ENCODE measurements at regions of chr18 and their contacts with region 1.

Region 1: DNA sequence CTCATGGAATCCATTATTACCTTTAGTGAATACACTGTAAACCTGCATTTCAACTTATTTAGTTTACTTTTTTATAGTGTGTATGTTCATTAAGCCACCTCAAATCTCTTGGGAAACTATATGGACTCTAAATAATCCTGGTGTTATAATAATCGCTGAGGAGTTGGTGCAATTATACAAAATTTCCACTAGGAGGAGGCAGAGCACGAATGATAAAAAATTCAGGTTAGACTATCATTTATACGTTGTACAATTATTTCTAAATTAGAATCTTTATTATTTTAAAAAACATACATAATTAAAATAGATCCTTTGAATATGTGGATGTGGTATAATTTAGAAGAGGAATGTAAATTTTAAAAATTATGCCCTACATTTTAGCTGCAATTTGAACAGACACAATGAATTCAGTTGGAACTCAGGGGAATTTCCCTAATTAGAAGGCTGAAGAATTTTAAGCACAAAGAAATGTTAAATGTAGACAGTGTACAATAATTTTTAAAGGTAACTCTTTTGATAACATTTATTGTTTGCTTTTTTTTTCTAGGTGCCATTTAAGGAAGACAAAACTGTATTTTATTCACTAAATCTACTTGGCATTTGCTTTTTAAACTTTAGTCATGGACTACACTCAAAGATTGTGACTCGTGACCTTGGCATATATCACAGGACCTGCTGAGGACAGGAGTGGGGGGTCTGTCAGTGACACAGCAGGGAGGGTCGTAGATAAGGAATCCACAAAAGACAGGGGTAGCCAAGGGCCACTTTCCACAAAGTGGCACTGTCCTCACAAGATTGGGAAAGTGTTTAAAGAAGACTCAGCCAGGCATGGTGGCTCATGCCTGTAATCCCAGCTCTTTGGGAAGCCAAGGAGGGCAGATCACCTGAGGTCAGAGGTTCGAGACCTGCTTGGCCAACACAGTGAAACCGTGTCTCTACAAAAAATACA is 45.5 kb downstream of the RAB12 start:
- DNase-seq: no peak
- ATAC-seq: no peak
- H3K4me3 Mint-ChIP-seq: no peak overlapping the region
- H3K27ac Mint-ChIP-seq: no peak overlapping the region
- H3K4me1 Mint-ChIP-seq: no peaks in the 10 kb centered on the region
- H3K27me3 Mint-ChIP-seq: peaks cover 16% of the 10 kb centered on the region
- CTCF ChIP-seq: peak; percentile 88

Region 2: DNA sequence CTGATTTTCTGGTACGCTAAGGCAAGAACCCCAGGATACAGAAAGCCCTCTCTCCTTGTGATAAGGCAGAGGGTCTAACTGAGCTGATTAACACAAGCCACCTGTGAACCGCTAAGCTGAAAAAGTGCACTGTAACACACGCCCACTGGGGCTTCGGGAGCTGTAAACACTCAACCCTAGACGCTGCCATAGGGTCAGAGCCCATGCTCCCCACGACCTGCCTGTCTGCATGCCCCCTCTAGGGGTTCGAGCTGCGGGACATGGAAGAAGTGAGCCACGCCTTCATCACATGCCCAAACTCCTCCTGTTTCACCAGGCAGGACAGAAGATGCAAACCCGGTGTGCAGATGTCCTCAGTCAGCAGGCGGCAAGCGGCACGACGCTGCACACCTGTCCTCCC is 219.4 kb before region 1 on chr18:
- CTCF ChIA-PET with region 1: no interaction called
- POLR2A ChIA-PET with region 1: no interaction called
- intact Hi-C with region 1: no loop called
- DNase-seq: no peak
- ATAC-seq: no peak
- H3K4me3 Mint-ChIP-seq: no peak overlapping the region
- H3K27ac Mint-ChIP-seq: no peak overlapping the region
- H3K4me1 Mint-ChIP-seq: no peaks in the 10 kb centered on the region
- H3K27me3 Mint-ChIP-seq: no peaks in the 10 kb centered on the region
- CTCF ChIP-seq: no peak

Region 3: DNA sequence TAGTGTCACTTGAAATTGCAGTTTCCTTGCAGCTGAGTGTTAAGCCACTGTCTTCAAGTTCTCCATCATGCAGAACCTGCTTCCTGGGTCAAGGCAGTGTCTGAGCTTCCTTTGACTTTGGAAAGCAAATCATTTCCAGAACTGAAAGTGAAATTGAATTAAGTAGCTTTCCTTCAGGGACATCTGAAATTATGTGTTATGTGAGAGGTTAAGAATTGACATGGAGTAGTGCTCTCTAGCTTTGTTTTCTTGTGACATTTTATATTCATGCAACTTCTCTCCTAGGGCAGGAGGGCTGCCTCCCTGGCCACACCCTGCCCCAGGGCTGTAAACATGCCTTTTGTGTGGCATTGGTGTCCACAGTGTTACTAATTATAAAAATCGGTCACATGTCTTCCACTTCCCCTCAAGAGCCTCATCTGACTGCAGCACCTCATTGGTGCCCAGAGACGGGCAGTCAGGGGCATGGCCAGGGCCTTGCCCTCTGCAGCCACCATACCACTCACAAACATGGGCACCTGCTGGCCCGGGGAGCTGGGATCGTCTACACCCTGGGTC is 31.1 kb before region 1 on chr18:
- CTCF ChIA-PET with region 1: interaction called, 11 read pairs
- POLR2A ChIA-PET with region 1: no interaction called
- intact Hi-C with region 1: no loop called
- DNase-seq: no peak
- ATAC-seq: peak; percentile 47
- H3K4me3 Mint-ChIP-seq: no peak overlapping the region
- H3K27ac Mint-ChIP-seq: peak overlapping the region; percentile 43
- H3K4me1 Mint-ChIP-seq: peaks cover 46% of the 10 kb centered on the region
- H3K27me3 Mint-ChIP-seq: no peaks in the 10 kb centered on the region
- CTCF ChIP-seq: no peak

Region 4: GRCh38 chr18:8643326-8643878 is 11.4 kb before region 1 on chr18:
- CTCF ChIA-PET with region 1: interaction called, 24 read pairs
- POLR2A ChIA-PET with region 1: interaction called, 3 read pairs
- intact Hi-C with region 1: no loop called
- DNase-seq: no peak
- ATAC-seq: no peak
- H3K4me3 Mint-ChIP-seq: no peak overlapping the region
- H3K27ac Mint-ChIP-seq: no peak overlapping the region
- H3K4me1 Mint-ChIP-seq: no peaks in the 10 kb centered on the region
- H3K27me3 Mint-ChIP-seq: peaks cover 8% of the 10 kb centered on the region
- CTCF ChIP-seq: no peak

Region 5: GRCh38 chr18:8673256-8674209 is 18.8 kb after region 1 on chr18:
- CTCF ChIA-PET with region 1: interaction called, 14 read pairs
- POLR2A ChIA-PET with region 1: no interaction called
- intact Hi-C with region 1: no loop called
- DNase-seq: no peak
- ATAC-seq: no peak
- H3K4me3 Mint-ChIP-seq: no peak overlapping the region
- H3K27ac Mint-ChIP-seq: no peak overlapping the region
- H3K4me1 Mint-ChIP-seq: no peaks in the 10 kb centered on the region
- H3K27me3 Mint-ChIP-seq: no peaks in the 10 kb centered on the region
- CTCF ChIP-seq: no peak

Region 6: DNA sequence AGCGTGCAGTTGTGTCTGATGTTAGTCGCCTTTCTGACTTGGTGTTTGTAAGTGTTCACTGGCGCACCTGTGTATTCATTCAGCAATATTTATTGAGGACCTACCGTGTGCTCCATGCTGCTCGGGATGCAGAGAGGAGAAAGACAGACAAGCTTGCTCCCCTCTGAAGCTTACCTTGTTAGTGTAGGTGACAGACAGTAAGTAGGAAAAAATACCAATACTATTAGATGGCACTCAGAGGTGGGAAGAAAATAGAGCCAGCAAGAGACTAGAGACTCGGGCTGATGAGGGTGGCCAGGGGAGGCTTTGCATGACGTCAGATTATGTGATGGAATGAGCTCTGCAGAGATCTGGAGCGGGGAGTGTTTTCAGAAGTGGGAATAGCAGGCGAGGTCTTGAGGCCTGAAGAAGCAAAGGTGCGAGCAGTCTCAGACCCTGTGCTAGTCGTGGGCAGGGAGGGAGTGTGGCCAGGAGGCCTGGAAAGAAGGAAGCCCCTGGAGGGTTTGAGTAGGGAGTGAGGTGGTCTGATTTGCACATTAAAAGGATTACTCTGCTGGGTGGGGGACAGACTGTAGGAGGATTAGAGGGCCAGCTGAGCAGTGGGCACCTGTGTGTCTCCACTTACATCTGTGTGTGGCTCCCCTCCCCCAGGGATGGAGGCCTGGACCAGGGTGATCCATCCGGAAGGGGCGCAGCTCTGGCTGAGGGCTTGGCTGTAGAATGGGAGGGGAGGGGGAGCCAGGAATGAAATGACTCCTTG is 62.4 kb after region 1 on chr18:
- CTCF ChIA-PET with region 1: no interaction called
- POLR2A ChIA-PET with region 1: no interaction called
- intact Hi-C with region 1: no loop called
- DNase-seq: no peak
- ATAC-seq: no peak
- H3K4me3 Mint-ChIP-seq: no peak overlapping the region
- H3K27ac Mint-ChIP-seq: no peak overlapping the region
- H3K4me1 Mint-ChIP-seq: no peaks in the 10 kb centered on the region
- H3K27me3 Mint-ChIP-seq: peaks cover 6% of the 10 kb centered on the region
- CTCF ChIP-seq: no peak

Region 7: DNA sequence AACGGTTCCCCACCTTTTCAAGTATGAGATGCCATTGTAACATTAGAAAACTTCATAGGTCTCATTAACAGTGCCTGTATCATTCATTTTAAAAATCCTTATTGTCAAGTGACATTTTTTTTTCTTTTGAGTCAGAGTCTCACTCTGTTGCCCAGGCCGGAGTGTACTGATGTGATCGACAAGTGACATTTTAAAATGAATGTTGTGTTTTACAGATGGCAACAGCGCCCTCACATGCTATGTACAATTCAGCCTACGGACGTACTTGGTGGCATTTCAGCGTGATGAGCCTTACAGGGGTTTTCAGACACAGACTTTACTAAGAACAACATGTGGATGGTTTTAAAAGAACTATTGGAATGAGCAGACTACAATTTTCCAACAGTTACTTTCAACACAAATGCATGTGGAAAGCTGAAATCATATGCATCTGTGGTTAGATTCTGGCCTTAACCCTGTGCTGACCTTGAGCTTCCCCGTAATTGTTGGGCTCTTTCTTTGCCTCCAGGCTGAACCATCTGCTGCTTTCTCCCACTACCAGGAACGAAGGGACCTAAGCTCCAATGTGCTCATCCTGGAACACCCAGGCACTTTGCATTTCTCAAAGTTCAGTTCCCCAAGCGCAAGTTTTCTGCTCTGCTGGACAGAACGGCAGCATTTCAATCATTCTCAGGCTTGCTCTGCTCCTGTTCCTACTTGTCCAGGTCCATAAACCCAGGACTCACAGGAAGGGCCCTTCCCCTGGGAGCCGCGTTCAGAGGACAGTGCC is 327.8 kb after region 1 on chr18:
- CTCF ChIA-PET with region 1: interaction called, 37 read pairs
- POLR2A ChIA-PET with region 1: no interaction called
- intact Hi-C with region 1: loop called (anchors 5 kb)
- DNase-seq: peak; percentile 52
- ATAC-seq: peak; percentile 58
- H3K4me3 Mint-ChIP-seq: no peak overlapping the region
- H3K27ac Mint-ChIP-seq: no peak overlapping the region
- H3K4me1 Mint-ChIP-seq: no peaks in the 10 kb centered on the region
- H3K27me3 Mint-ChIP-seq: no peaks in the 10 kb centered on the region
- CTCF ChIP-seq: no peak

Region 8: GRCh38 chr18:8988261-8988871 is 333.6 kb after region 1 on chr18:
- CTCF ChIA-PET with region 1: interaction called, 37 read pairs
- POLR2A ChIA-PET with region 1: no interaction called
- intact Hi-C with region 1: loop called (anchors 5 kb)
- DNase-seq: peak; percentile 65
- ATAC-seq: peak; percentile 74
- H3K4me3 Mint-ChIP-seq: no peak overlapping the region
- H3K27ac Mint-ChIP-seq: no peak overlapping the region
- H3K4me1 Mint-ChIP-seq: no peaks in the 10 kb centered on the region
- H3K27me3 Mint-ChIP-seq: peaks cover 6% of the 10 kb centered on the region
- CTCF ChIP-seq: peak; percentile 80

Measured in activated CD8-positive, alpha-beta T cell treated with anti-CD3 and anti-CD28 coated beads for 36 hours (primary cell).